RWPE1 (cell line): ENCODE measurements at regions of chr20 and their contacts with region 1.

Region 1: DNA sequence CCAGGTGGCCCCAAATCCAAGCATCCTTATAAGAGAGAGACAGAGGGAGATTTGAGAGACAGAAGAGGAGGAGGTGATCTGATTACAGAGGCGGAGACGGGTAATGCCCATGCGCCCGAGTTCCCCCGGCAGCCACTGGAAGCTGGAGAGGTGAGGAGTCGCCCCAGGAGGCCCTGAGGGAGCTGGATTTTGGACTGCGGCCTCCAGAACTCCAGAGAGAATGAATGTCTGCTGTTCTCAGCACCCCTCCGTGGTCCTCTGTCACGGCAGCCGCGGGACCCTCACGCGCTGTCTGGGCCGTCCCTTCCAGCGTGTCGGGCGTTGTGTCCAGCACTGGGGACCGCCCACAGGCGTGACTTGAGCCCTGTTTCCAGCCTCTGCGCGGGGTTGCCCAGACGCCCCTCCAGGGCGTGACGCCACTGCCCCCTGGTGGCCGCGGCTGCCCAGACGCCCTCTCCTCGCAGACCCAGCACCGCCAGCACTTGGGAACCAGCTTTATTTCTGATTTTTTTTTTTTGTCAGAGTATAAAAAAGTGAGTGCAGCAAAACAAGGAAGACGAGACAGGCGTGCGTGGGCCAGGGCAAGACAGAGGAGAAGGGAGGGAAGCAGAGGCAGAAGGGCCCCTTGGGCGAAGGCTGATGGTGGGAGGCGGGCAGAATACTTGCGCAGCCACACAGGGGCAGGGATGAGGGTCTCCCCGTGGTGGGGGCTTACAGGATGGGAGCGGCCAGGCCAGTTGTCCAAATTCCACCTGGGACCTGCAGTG is 4.1 kb upstream of the ZNF512B start:
- DNase-seq: peak; percentile 86
- H3K27ac ChIP-seq: peak overlapping the region; percentile 62
- CTCF ChIP-seq: peak; percentile 100

Region 2: GRCh38 chr20:63701730-63702665 is 271.8 kb before region 1 on chr20:
- CTCF ChIA-PET with region 1: interaction called, 10 read pairs
- POLR2A ChIA-PET with region 1: no interaction called
- DNase-seq: no peak
- H3K27ac ChIP-seq: peak overlapping the region; percentile 97
- CTCF ChIP-seq: no peak

Region 3: GRCh38 chr20:63785691-63786131 is 188.1 kb before region 1 on chr20:
- CTCF ChIA-PET with region 1: interaction called, 12 read pairs
- POLR2A ChIA-PET with region 1: no interaction called
- DNase-seq: no peak
- H3K27ac ChIP-seq: no peak overlapping the region
- CTCF ChIP-seq: no peak

Region 4: GRCh38 chr20:63955827-63956663 is 17.8 kb before region 1 on chr20 and contains the start of gene UCKL1:
- CTCF ChIA-PET with region 1: interaction called, 18 read pairs
- POLR2A ChIA-PET with region 1: interaction called, 3 read pairs
- DNase-seq: peak; percentile 91
- H3K27ac ChIP-seq: peak within 1 kb of the TSS; percentile 99
- CTCF ChIP-seq: peak; percentile 51